ENCODE measurements at regions of chr16 and their contacts with region 1.

Region 1: GRCh38 chr16:19753815-19754643 is 36.0 kb downstream of the IQCK start:
- DNase-seq: no peak
- ATAC-seq: peak in 7 of 8 donors; percentile 56 to 87 (median 69)
- H3K4me3 ChIP-seq: no peak overlapping the region
- H3K27ac ChIP-seq: peak overlapping the region; percentile 8 to 88 (median 80)
- H3K4me1 ChIP-seq: peaks cover 0 to 83% (median 34%) of the 10 kb centered on the region in 9 donors
- H3K27me3 ChIP-seq: no peaks in the 10 kb centered on the region
- CTCF ChIP-seq: no peak

Region 2: DNA sequence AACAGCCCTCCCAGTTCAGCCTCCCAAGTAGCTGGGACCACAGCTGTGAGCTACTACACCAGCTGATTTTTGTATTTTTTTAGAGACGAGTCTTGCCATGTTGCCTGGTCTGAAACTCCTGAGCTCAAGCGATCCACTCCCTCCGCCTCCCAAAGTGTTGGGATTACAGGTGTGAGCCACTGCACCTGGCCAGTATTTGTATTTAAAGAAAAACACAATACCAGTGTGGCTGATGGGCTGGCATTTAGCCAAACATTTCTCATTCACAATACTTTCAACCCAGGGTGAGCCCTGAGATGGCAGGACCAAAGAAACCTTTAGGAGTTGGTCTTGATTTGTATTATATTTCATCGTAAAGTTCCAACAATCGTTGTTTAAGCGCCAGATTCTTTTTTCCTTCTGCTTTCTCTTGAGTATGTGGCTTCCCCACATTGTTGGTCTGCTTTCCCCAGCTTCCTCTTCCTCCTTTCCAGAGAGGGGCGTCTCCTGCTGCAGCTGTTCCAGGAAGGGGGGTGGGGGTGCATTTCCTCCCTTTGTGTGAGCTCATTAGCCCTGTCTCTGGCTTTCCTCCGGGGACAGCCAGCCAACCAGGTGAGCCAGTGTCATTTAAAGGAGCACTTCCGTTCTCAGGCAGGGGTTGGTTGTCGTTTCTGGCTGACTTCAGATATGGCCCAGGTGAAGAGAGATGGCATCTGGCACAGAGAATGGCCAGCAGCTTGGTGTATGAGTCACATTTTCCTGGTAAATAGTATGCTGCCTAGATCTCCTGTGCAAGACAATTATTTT is 50.7 kb after region 1 on chr16:
- intact Hi-C with region 1: loop called in 2 of 10 experiments (anchors 5 kb)
- DNase-seq: peak; percentile 66 to 90
- ATAC-seq: peak; percentile 79 to 89 (median 87)
- H3K4me3 ChIP-seq: no peak overlapping the region
- H3K27ac ChIP-seq: peak overlapping the region; percentile 51 to 85 (median 72)
- H3K4me1 ChIP-seq: peaks cover 6 to 58% (median 37%) of the 10 kb centered on the region in 9 donors
- H3K27me3 ChIP-seq: no peaks in the 10 kb centered on the region
- CTCF ChIP-seq: no peak

Measured in heart right ventricle (tissue), 16 donors.